Activated B cell treated with CpG ODN at 0.5 μM for 24 hours (primary cell): ENCODE measurements at regions of chr13 and their contacts with region 1.

Region 1: DNA sequence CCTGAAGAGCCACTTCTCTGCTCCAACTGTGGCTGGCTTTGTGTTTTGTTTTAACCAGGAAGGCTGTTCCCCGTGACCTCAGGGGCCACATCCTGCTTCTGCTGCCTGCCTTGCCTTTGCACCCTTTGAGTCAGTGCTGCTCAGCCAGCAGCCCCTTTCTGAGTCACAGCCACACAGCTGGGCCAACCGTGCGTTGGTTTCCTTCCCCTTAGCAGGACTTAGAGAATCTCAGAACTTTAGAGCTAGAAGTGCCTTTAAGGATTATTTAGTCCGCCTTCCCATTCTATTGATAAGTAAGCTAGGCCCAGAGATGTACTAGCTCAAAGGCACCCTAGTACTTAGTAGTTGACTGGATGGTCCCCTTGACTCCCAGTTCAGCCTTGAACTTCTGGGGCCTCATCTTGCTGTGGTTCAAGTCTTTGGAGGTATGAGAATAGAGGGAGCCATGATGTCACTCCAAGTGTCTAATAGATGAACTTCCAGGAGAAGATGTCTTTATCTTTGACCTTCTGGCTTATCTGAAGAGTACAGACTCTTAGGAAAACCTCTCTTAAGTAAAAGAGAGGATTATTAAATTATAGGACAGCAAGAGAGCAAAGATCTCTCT is 8.0 kb downstream of the RGCC start:
- DNase-seq: peak; percentile 57
- ATAC-seq: peak; percentile 92
- H3K4me3 Mint-ChIP-seq: peak overlapping the region; percentile 47
- H3K27ac Mint-ChIP-seq: peak overlapping the region; percentile 86
- H3K4me1 Mint-ChIP-seq: peaks cover 56% of the 10 kb centered on the region
- H3K27me3 Mint-ChIP-seq: peaks cover 3% of the 10 kb centered on the region
- CTCF ChIP-seq: no peak

Region 2: GRCh38 chr13:41193919-41194824 is 271.2 kb before region 1 on chr13 and contains the start of gene KBTBD7:
- CTCF ChIA-PET with region 1: no interaction called
- POLR2A ChIA-PET with region 1: no interaction called
- intact Hi-C with region 1: loop called (anchors 10 kb)
- DNase-seq: peak; percentile 85
- ATAC-seq: peak; percentile 92
- H3K4me3 Mint-ChIP-seq: peak within 1 kb of the TSS; percentile 93
- H3K27ac Mint-ChIP-seq: peak within 1 kb of the TSS; percentile 94
- H3K4me1 Mint-ChIP-seq: peaks cover 54% of the 10 kb centered on the region
- H3K27me3 Mint-ChIP-seq: no peaks in the 10 kb centered on the region
- CTCF ChIP-seq: no peak
- total RNA-seq, gene KBTBD7: 5.2 and 6.4 TPM in 2 replicates

Region 3: DNA sequence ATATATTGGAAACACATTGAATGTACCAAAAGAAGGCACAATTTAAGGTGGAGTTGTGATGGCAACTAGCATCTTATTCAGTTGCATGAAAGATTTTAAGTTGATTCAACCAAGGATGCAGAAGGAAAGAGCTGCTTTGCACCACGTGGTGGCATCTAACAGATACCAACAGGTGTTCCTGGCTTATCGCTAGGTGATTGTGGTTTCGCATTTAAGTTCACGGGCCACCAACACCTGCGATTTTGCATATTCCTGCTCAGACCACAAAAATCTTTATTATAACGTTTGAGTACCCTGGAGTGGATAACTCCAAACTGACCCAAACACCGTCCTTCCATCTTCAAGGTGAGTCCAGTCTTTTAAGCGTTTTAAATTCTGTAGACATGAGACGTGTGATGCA is 37.3 kb after region 1 on chr13:
- CTCF ChIA-PET with region 1: interaction called, 3 read pairs
- POLR2A ChIA-PET with region 1: no interaction called
- intact Hi-C with region 1: loop called (anchors 2 kb)
- DNase-seq: no peak
- ATAC-seq: peak; percentile 45
- H3K4me3 Mint-ChIP-seq: peak overlapping the region; percentile 12
- H3K27ac Mint-ChIP-seq: peak overlapping the region; percentile 2
- H3K4me1 Mint-ChIP-seq: peaks cover 53% of the 10 kb centered on the region
- H3K27me3 Mint-ChIP-seq: no peaks in the 10 kb centered on the region
- CTCF ChIP-seq: no peak